PC-3 (cell line): ENCODE measurements at regions of chrX and their contacts with region 1.

Region 1: DNA sequence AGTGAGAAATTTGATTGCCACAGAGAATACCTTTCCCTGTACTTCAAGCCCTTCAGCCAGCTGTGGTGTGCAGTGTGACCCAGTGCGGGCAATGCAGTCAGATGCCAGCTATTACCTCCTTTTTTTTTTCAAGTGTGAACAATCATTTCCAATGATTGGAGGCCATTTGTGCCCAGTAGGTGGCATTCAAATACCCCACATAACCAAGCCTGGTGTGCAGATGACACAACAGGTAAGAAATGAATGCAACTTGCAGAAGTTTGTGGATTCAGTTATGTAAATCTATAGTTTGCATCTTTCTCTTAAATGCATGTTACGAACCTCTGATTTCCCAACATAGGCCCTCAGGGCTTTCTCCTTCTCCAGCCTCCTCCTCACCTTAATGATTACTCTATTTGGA is 98.0 kb downstream of the CLCN4 start:
- DNase-seq: peak; percentile 71
- ATAC-seq: peak; percentile 74
- H3K4me3 ChIP-seq: no peak overlapping the region
- H3K27ac ChIP-seq: no peak overlapping the region
- H3K4me1 ChIP-seq: no peaks in the 10 kb centered on the region
- H3K27me3 ChIP-seq: no peaks in the 10 kb centered on the region
- CTCF ChIP-seq: peak; percentile 66

Region 2: DNA sequence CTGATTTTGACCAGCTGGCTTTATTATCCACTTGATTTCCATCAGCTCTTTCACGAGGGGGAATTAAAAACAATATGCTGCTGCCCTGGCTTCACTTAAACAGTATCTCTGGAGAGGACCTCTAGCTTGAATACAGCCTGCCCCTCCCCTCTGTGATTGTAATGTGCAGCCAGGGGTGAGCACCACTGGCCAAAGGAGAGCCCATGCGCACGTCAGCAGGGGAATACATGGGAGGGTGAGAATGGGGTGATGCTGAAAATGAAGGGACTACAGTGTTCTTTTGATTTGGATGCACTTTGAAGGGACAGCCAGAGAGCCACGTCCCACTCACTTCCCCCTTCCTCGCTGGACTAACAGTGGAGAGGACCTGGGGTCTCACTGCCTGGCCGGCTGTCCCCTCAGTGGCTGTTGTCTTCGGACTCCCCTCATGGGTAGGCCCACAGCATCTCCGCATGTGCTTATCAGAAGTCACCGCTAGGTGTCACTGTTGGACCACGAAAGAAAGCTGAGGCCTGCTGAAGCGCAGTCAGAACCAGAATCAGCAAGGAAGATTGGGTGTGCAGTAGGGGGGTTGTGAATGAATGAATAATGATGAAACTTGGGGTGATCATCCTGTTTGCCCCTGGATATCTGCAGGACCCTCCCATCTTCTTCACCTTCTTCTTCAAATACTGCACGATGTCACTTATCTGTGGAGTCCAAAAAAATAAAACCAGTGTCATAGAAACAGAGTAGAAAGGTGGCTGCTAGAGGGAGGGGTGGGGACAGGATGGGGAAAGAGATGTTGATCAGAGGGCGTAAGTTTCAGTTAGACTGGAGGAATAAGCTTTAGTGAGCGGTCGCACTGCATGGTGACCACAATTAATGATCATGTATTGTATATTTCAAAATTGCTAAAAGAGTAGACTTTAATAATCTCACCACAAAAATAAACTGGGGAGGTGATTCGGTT is 65.1 kb before region 1 on chrX:
- CTCF ChIA-PET with region 1: interaction called, 10 read pairs
- POLR2A ChIA-PET with region 1: no interaction called
- intact Hi-C with region 1: no loop called
- DNase-seq: peak; percentile 86
- ATAC-seq: peak; percentile 95
- H3K4me3 ChIP-seq: no peak overlapping the region
- H3K27ac ChIP-seq: peak overlapping the region; percentile 70
- H3K4me1 ChIP-seq: peaks cover 7% of the 10 kb centered on the region
- H3K27me3 ChIP-seq: no peaks in the 10 kb centered on the region
- CTCF ChIP-seq: peak; percentile 84

Region 3: DNA sequence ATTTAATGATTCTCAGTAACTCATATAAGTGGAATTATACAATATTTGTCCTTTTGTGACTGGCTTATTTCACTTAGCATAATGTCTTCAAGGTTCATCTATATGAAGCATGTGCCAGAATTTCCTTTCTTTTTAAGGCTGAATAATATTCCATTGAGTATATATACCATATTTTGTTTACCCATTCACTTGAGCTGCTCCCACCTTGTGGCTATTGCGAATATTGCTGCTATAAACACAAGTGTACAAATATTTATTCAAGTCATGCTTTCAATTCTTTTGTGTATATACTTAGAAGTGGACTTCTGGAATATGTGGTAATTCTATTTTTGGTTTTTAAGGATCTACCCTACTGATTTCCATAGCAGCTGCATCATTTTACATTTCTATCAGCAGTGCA is 146.5 kb after region 1 on chrX:
- CTCF ChIA-PET with region 1: no interaction called
- POLR2A ChIA-PET with region 1: no interaction called
- intact Hi-C with region 1: loop called (anchors 10 kb)
- DNase-seq: peak; percentile 57
- ATAC-seq: peak; percentile 35; the same call in 1 of the 2 replicates
- H3K4me3 ChIP-seq: no peak overlapping the region
- H3K27ac ChIP-seq: no peak overlapping the region
- H3K4me1 ChIP-seq: no peaks in the 10 kb centered on the region
- H3K27me3 ChIP-seq: no peaks in the 10 kb centered on the region
- CTCF ChIP-seq: peak; percentile 57

Region 4: DNA sequence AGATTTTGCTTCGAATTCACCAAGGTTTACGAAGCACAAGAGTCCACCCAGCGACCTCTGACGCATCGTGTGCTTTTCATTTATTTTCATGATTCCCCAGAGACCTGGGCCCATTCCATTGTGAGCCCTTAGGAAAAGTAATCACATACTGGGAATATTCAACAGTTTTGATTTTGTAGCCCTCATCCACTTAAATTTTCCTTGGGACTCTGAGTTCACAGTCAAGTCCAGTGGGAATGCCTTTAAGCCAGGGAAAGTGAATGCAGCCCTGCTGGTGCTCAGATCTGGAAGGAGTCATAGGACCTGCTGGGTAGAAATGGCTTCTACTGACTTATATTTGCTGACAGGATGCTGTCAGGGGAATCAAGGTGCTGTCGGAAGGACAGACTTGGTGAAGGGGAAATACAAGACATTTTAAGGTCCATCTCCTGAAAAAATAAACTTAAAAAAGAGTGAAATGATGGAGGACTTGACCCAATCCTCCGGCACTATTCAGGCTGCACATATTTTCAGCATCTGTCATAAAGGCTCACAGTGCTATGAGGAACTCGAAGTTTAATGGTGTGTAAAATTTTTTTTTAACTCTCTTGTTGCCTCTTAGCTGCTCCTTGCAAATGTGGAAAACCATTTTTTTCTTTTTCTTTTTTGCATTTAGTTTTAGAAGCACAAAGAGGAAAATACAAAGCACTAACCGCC is 160.7 kb after region 1 on chrX:
- CTCF ChIA-PET with region 1: no interaction called
- POLR2A ChIA-PET with region 1: no interaction called
- intact Hi-C with region 1: no loop called
- DNase-seq: peak; percentile 58
- ATAC-seq: peak; percentile 78
- H3K4me3 ChIP-seq: no peak overlapping the region
- H3K27ac ChIP-seq: no peak overlapping the region
- H3K4me1 ChIP-seq: peaks cover 21% of the 10 kb centered on the region
- H3K27me3 ChIP-seq: no peaks in the 10 kb centered on the region
- CTCF ChIP-seq: no peak

Region 5: GRCh38 chrX:10615931-10616775 is 361.4 kb after region 1 on chrX:
- CTCF ChIA-PET with region 1: interaction called, 6 read pairs
- POLR2A ChIA-PET with region 1: no interaction called
- intact Hi-C with region 1: loop called (anchors 1 kb)
- DNase-seq: peak; percentile 69
- ATAC-seq: no peak
- H3K4me3 ChIP-seq: peak overlapping the region; percentile 86
- H3K27ac ChIP-seq: peak overlapping the region; percentile 92
- H3K4me1 ChIP-seq: peaks cover 55% of the 10 kb centered on the region
- H3K27me3 ChIP-seq: no peaks in the 10 kb centered on the region
- CTCF ChIP-seq: peak; percentile 83

Region 6: DNA sequence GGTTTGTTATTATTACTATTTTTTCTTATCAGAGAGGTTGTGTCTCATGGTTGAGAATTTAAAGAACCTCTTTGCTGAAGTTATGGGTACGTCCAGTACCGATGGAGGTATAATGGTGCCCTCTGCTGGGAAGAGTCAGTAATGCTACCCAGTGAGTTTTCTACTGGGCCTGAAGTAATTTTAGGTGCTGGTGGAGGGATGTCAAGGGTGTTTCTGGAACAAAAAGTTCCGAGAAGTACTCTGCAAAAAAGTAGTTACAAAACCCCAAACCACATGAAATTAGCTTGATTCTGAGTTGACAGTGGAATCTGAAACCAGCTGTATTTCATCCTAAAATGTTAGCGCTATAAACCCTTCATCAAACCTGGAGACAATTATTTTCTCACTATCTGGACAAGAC is 468.1 kb after region 1 on chrX:
- CTCF ChIA-PET with region 1: interaction called, 5 read pairs
- POLR2A ChIA-PET with region 1: no interaction called
- intact Hi-C with region 1: loop called (anchors 1 kb)
- DNase-seq: peak; percentile 78
- ATAC-seq: peak; percentile 64
- H3K4me3 ChIP-seq: no peak overlapping the region
- H3K27ac ChIP-seq: no peak overlapping the region
- H3K4me1 ChIP-seq: no peaks in the 10 kb centered on the region
- H3K27me3 ChIP-seq: no peaks in the 10 kb centered on the region
- CTCF ChIP-seq: peak; percentile 78